Breast epithelium (tissue), 4 donors: ENCODE measurements at regions of chr14 and their contacts with region 1.

Region 1: DNA sequence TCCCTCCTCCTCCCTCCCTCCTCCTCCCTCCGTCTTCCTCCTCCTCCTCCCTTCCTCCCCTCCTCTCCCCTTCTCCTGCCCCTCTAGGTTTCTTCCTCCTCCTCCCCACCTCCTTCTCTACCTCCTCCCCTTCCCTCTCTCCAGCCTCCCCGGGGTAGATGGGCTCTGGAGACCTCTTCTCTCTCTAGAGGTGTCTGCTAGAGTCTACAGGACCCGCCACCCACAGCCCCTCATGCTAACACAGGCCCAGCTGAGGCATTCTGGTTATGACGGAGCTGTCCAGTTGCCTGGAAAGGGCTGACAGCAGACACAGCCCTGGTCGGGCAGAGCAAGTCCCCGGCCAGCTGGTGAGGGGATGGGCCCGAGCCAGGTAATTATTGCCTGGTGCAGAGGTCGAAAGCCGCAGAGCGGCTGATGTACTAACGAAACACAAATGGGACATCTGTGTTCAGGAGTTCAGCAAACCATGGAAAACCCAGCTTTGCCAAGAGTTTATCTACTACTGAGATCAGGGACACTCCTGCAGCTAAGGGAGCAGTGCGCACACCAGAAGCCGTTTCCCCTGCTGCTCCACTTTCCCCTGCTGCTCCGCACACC is 96.2 kb downstream of the PAPOLA start:
- DNase-seq: no peak
- H3K4me3 ChIP-seq: no peak overlapping the region
- H3K27ac ChIP-seq: no peak overlapping the region
- H3K4me1 ChIP-seq: no peaks in the 10 kb centered on the region
- H3K27me3 ChIP-seq: peaks cover 0 to 4% of the 10 kb centered on the region in 2 donors
- CTCF ChIP-seq: no peak
- POLR2A ChIP-seq: no peak

Region 2: GRCh38 chr14:97618917-97619690 is 1020.7 kb after region 1 on chr14:
- intact Hi-C with region 1: loop called (anchors 5 kb)
- DNase-seq: no peak
- H3K4me3 ChIP-seq: no peak overlapping the region
- H3K27ac ChIP-seq: no peak overlapping the region
- H3K4me1 ChIP-seq: no peaks in the 10 kb centered on the region
- H3K27me3 ChIP-seq: no peaks in the 10 kb centered on the region
- CTCF ChIP-seq: no peak
- POLR2A ChIP-seq: no peak